ENCODE measurements at regions of chr3 and their contacts with region 1.

Region 1: DNA sequence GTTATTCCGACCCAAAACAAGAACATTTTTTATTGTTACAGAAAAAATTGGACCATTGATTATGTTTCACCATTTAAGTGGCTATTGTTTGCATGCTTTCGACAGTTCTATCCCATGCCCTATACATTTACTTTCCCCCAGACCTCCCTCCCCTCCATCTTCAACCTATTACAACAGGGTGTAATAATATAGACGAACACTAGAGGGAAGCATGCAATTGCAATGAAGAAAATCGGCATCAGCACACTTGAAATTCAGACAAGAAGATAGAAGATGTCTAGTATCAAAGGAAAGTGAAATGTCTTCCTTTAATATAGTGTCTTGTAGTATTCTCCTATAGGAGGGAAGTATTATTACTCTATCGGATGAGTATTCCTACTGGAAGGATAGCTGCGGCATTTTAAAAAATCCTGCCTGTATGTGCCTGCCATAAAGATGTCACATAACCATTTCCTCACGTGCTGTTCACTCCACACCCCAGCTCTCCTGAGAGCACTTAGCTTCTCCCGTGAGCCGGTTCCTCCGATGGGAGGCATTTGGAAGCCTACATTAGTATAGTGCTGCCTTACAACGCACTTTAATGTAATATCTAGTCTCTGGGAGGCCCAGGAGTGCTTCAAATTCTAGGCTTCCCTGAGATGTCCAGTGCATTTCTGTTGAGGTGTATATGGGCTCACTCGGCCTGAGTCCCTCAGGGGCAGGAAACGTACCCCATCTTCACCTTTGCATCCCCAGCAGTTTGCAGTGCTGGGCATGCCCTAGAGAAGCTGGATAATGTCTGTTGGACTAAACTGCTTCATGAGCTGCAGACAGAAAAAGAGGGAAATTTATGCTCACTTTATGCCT is 17.8 kb upstream of the ERICH6 start:
- DNase-seq: peak; percentile 71 to 76 (median 71)
- ATAC-seq: peak; percentile 76
- H3K4me3 ChIP-seq: no peak overlapping the region
- H3K27ac ChIP-seq: no peak overlapping the region
- H3K4me1 ChIP-seq: peaks cover 9 to 15% of the 10 kb centered on the region in 2 experiments; a peak in 4 of 5 replicates
- H3K27me3 ChIP-seq: no peaks in the 10 kb centered on the region
- CTCF ChIP-seq: peak; percentile 72 to 92 (median 74); a peak in 5 of 6 replicates
- EP300 ChIP-seq: no peak
- POLR2A ChIP-seq: no peak
- RAD21 ChIP-seq: peak; percentile 90 to 98

Region 2: DNA sequence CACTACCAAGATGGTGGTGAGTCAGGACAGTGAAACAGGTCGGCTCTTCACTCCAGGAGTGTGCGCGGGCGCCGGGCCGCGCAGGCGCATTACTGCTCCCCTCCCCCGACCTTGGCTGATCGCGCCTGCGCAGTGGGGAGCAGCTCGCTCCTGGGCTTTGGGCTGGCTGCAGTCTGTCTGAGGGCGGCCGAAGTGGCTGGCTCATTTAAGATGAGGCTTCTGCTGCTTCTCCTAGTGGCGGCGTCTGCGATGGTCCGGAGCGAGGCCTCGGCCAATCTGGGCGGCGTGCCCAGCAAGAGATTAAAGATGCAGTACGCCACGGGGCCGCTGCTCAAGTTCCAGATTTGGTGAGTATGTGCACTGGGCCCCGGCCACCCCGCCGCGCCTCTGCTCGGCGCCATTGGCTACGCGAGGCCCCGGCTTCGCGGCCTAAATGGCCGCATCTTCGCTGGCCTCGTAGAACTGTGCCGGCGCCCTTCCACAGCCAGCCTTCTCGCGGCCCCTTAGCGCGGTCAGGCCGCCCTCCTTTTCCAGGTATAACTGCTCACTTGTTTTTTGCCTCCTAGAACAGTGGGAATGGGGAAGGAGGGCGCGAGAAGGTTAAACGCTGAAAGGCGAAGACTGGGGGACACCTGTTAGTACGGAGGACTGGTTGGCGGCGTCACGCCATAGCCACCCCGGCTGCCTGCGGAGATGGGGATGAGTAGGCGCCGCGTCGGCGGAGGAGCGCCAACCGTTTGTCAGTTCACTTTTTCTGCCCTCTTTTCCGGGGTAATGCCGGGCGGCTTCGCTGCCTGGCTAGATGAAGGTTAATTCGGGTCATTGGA is 118.1 kb before region 1 on chr3 and contains the start of gene SELENOT:
- CTCF ChIA-PET with region 1: no interaction called
- POLR2A ChIA-PET with region 1: no interaction called
- in situ Hi-C with region 1: no loop called
- intact Hi-C with region 1: no loop called
- DNase-seq: peak; percentile 97 to 98 (median 98)
- ATAC-seq: peak; percentile 82
- H3K4me3 ChIP-seq: peak within 1 kb of the TSS; percentile 94
- H3K27ac ChIP-seq: peak within 1 kb of the TSS; percentile 84
- H3K4me1 ChIP-seq: peaks cover 16 to 40% of the 10 kb centered on the region in 2 experiments
- H3K27me3 ChIP-seq: no peaks in the 10 kb centered on the region
- CTCF ChIP-seq: peak in 2 of 3 experiments; percentile 36 to 48; a peak in 3 of 6 replicates
- EP300 ChIP-seq: no peak; the same call in 1 of the 2 replicates
- POLR2A ChIP-seq: peak; percentile 98
- RAD21 ChIP-seq: peak in 1 of 2 experiments; percentile 32; a peak in 3 of 4 replicates
- polyA plus RNA-seq, gene SELENOT: 261 to 317 TPM

Region 3: GRCh38 chr3:150775091-150775501 is 53.6 kb after region 1 on chr3:
- CTCF ChIA-PET with region 1: no interaction called
- POLR2A ChIA-PET with region 1: no interaction called
- in situ Hi-C with region 1: loop called (anchors 5 kb)
- intact Hi-C with region 1: no loop called
- DNase-seq: no peak
- ATAC-seq: no peak
- H3K4me3 ChIP-seq: no peak overlapping the region
- H3K27ac ChIP-seq: no peak overlapping the region
- H3K4me1 ChIP-seq: peaks cover 0 to 25% of the 10 kb centered on the region in 2 experiments; a peak in 3 of 5 replicates
- H3K27me3 ChIP-seq: no peaks in the 10 kb centered on the region; a peak in 1 of 5 replicates
- CTCF ChIP-seq: no peak
- EP300 ChIP-seq: no peak
- POLR2A ChIP-seq: no peak
- RAD21 ChIP-seq: no peak

Region 4: GRCh38 chr3:150830094-150830681 is 108.7 kb after region 1 on chr3:
- CTCF ChIA-PET with region 1: no interaction called
- POLR2A ChIA-PET with region 1: no interaction called
- in situ Hi-C with region 1: no loop called
- intact Hi-C with region 1: loop called (anchors 10 kb)
- DNase-seq: peak; percentile 15 to 47 (median 24)
- ATAC-seq: peak; percentile 92
- H3K4me3 ChIP-seq: no peak overlapping the region
- H3K27ac ChIP-seq: no peak overlapping the region
- H3K4me1 ChIP-seq: no peaks in the 10 kb centered on the region; a peak in 1 of 5 replicates
- H3K27me3 ChIP-seq: peaks cover 18 to 26% of the 10 kb centered on the region in 2 experiments
- CTCF ChIP-seq: peak; percentile 58 to 66 (median 66)
- EP300 ChIP-seq: no peak
- POLR2A ChIP-seq: no peak
- RAD21 ChIP-seq: peak; percentile 12 to 42; a peak in 3 of 4 replicates

Region 5: GRCh38 chr3:150870396-150870795 is 148.9 kb after region 1 on chr3:
- CTCF ChIA-PET with region 1: interaction called, 7 read pairs
- POLR2A ChIA-PET with region 1: no interaction called
- in situ Hi-C with region 1: no loop called
- intact Hi-C with region 1: loop called (anchors 1 kb)
- DNase-seq: no peak
- ATAC-seq: no peak
- H3K4me3 ChIP-seq: no peak overlapping the region
- H3K27ac ChIP-seq: no peak overlapping the region
- H3K4me1 ChIP-seq: no peaks in the 10 kb centered on the region
- H3K27me3 ChIP-seq: peaks cover 2 to 10% of the 10 kb centered on the region in 2 experiments; a peak in 2 of 5 replicates
- CTCF ChIP-seq: no peak
- EP300 ChIP-seq: no peak
- POLR2A ChIP-seq: no peak
- RAD21 ChIP-seq: no peak

Region 6: DNA sequence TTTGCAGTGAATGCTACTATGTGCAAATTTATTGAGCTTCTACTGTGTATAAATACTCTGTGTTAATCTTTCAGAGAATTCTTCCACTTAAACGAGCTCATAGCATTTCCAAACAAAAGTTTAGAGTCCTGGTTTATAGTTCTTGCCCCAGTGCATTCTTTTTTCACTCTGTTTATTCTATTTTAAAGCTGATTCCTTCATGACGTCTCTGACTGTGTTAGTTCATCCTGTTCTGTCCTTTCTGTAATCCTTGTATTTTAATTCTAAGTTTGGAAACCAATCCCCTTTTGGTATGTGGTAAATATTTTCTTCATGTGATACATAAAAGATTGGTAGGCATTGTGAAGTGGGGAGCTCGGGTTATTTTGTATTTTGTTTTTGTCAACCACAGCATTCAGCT is 538.2 kb after region 1 on chr3:
- CTCF ChIA-PET with region 1: no interaction called
- POLR2A ChIA-PET with region 1: no interaction called
- in situ Hi-C with region 1: no loop called
- intact Hi-C with region 1: no loop called
- DNase-seq: no peak
- ATAC-seq: no peak
- H3K4me3 ChIP-seq: no peak overlapping the region
- H3K27ac ChIP-seq: no peak overlapping the region
- H3K4me1 ChIP-seq: no peaks in the 10 kb centered on the region
- H3K27me3 ChIP-seq: peaks cover 0 to 15% of the 10 kb centered on the region in 2 experiments; a peak in 3 of 5 replicates
- CTCF ChIP-seq: no peak
- EP300 ChIP-seq: no peak
- POLR2A ChIP-seq: no peak
- RAD21 ChIP-seq: no peak

Measured in K562 (cell line).